Right ventricle myocardium inferior (tissue), 1 donor: ENCODE measurements at regions of chr16 and their contacts with region 1.

Region 1: GRCh38 chr16:57576429-57576870 is 34.0 kb downstream of the ADGRG5 start:
- DNase-seq: peak; percentile 82
- ATAC-seq: peak; percentile 64

Region 2: GRCh38 chr16:57383276-57384247 is 192.9 kb before region 1 on chr16:
- intact Hi-C with region 1: no loop called
- DNase-seq: no peak
- ATAC-seq: no peak

Region 3: DNA sequence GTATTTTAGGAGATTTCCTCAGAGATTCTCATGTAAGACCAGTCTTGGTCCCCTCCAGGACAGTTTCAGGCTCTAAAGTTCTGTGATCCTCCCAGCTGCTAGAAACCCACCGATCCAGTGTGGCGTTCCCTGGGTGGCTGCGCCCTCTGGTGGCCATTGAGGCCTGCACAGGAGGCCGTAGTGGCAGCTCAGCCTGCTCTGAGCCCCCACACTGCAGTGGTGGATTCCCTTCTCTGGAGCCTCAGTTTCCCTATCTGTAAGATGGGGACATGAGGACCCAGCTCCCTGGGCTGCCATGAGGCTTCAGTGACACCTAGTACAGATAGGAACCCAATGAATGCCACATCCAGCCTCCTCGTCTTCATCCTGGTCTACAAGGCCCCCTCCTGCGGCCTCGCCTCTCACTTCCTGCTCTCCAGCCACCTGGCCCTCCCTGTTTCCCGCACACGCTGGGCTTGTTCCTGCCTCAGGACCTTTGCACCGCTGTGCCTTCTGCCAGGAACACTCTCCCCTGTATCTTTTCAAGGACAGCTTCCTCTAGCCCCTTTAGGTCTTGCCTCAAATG is 56.6 kb before region 1 on chr16:
- intact Hi-C with region 1: no loop called
- DNase-seq: peak; percentile 90
- ATAC-seq: peak; percentile 76

Region 4: DNA sequence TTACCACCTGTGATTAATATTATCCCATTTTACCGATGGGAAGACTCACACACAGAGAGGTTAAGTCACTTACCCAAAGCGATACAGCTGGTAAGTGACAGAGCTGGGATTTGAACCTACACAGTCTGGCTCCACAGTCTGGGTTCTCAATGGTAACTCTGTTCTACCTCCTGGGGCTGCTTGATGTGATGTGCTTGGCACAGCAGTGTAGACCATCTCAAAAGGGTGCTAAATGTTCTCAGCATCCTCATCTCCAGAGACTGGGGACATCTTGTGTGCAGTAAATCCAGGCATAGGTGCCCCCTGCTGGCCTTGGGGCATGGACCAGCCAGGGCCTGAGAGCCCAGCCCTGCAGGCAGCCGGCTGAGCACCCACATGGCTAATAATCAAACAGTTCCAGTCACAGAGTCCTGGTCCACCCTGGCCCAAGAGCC is 143.7 kb after region 1 on chr16:
- intact Hi-C with region 1: loop called (anchors 5 kb)
- DNase-seq: no peak
- ATAC-seq: peak; percentile 46

Region 5: DNA sequence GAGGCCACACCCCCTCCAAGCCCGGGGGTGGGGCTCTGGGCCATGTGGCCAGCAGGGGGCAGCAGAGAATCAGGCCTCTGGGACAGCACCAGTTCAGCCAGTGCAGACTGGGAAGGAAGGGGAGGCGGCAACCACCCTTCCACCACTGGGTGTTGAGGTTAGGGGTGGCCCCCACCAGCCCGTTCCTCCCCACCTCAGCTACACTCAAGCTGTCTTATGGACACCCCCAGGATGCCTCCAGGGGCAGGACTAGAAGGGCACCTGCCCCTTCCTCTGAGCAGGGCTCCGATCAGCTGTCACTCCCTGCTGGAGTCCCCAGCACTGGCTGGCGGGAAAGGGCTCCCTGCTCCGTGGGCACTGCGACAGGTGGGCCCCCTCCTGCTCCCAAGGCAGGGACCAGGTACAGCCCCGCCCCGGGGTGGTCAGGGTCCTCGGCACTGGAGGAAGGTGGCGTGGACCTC is 180.9 kb after region 1 on chr16:
- intact Hi-C with region 1: no loop called
- DNase-seq: peak; percentile 93
- ATAC-seq: peak; percentile 92

Region 6: DNA sequence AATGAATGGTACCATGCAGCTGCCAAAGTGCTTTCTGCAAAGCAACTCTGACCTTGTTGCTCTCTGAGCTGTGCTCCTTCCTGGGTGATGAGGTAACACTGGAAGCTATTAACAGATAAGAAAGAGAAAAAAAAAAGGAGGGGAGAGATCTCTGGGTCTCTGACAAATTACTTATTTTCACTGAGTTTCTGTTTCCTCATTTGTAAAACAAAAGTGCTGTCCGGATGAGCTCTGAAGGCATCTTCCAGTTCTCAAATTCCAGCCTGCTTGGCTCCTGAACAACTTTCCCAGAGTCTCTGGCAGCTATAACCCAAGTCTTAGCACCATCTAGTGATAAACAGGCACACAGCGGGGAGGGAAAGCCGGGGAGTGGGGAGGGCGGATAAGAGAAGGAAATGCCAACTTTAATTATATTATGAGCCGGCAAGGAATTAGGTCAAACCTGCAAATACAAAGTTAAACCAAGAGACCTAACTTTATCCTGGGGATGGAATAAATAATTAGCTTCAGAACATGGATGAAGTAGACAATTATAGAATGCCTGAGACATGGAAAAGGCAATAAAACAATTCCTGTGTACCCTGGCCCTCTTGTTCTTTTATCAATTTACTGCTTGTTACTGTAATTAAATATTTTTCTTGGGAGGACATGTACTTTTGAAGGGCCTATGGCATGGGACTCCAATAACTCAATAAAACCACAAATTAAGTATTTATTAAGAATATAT is 287.1 kb after region 1 on chr16:
- intact Hi-C with region 1: loop called (anchors 10 kb)
- DNase-seq: no peak
- ATAC-seq: peak; percentile 88